B cell (primary cell): ENCODE measurements at regions of chr17 and their contacts with region 1.

Region 1: GRCh38 chr17:40113110-40113906 is 8.5 kb upstream of the MSL1 start:
- DNase-seq: peak; percentile 94
- ATAC-seq: peak; percentile 86
- H3K4me3 ChIP-seq: peak overlapping the region in 4 of 5 experiments; percentile 36 to 62 (median 58)
- H3K4me3 Mint-ChIP-seq: peak overlapping the region; percentile 92
- H3K27ac ChIP-seq: peak overlapping the region; percentile 28 to 40
- H3K27ac Mint-ChIP-seq: peak overlapping the region; percentile 89
- H3K4me1 ChIP-seq: peaks cover 34 to 41% of the 10 kb centered on the region in 2 donors
- H3K4me1 Mint-ChIP-seq: peaks cover 43% of the 10 kb centered on the region
- H3K27me3 ChIP-seq: no peaks in the 10 kb centered on the region
- H3K27me3 Mint-ChIP-seq: no peaks in the 10 kb centered on the region
- CTCF ChIP-seq: peak; percentile 84

Region 2: GRCh38 chr17:39852239-39852638 is 261.1 kb before region 1 on chr17:
- CTCF ChIA-PET with region 1: no interaction called
- POLR2A ChIA-PET with region 1: no interaction called
- intact Hi-C with region 1: no loop called
- DNase-seq: no peak
- ATAC-seq: no peak
- H3K4me3 ChIP-seq: peak overlapping the region in 1 of 5 experiments; percentile 9
- H3K4me3 Mint-ChIP-seq: peak overlapping the region; percentile 61
- H3K27ac ChIP-seq: peak overlapping the region in 1 of 2 donors; percentile 85
- H3K27ac Mint-ChIP-seq: peak overlapping the region; percentile 81
- H3K4me1 ChIP-seq: peaks cover 60 to 63% of the 10 kb centered on the region in 2 donors
- H3K4me1 Mint-ChIP-seq: peaks cover 64% of the 10 kb centered on the region
- H3K27me3 ChIP-seq: no peaks in the 10 kb centered on the region
- H3K27me3 Mint-ChIP-seq: no peaks in the 10 kb centered on the region
- CTCF ChIP-seq: no peak

Region 3: GRCh38 chr17:39923836-39924690 is 189.2 kb before region 1 on chr17:
- CTCF ChIA-PET with region 1: no interaction called
- POLR2A ChIA-PET with region 1: no interaction called
- intact Hi-C with region 1: no loop called
- DNase-seq: no peak
- ATAC-seq: no peak
- H3K4me3 ChIP-seq: no peak overlapping the region
- H3K4me3 Mint-ChIP-seq: no peak overlapping the region
- H3K27ac ChIP-seq: peak overlapping the region in 1 of 2 donors; percentile 27
- H3K27ac Mint-ChIP-seq: no peak overlapping the region
- H3K4me1 ChIP-seq: peaks cover 42 to 52% of the 10 kb centered on the region in 2 donors
- H3K4me1 Mint-ChIP-seq: peaks cover 59% of the 10 kb centered on the region
- H3K27me3 ChIP-seq: no peaks in the 10 kb centered on the region
- H3K27me3 Mint-ChIP-seq: no peaks in the 10 kb centered on the region
- CTCF ChIP-seq: no peak

Region 4: GRCh38 chr17:40018211-40019121 is 94.8 kb before region 1 on chr17:
- CTCF ChIA-PET with region 1: interaction called, 56 read pairs
- POLR2A ChIA-PET with region 1: no interaction called
- intact Hi-C with region 1: loop called (anchors 1 kb)
- DNase-seq: no peak
- ATAC-seq: no peak
- H3K4me3 ChIP-seq: no peak overlapping the region
- H3K4me3 Mint-ChIP-seq: no peak overlapping the region
- H3K27ac ChIP-seq: no peak overlapping the region
- H3K27ac Mint-ChIP-seq: no peak overlapping the region
- H3K4me1 ChIP-seq: peaks cover 0 to 3% of the 10 kb centered on the region in 2 donors
- H3K4me1 Mint-ChIP-seq: no peaks in the 10 kb centered on the region
- H3K27me3 ChIP-seq: no peaks in the 10 kb centered on the region
- H3K27me3 Mint-ChIP-seq: no peaks in the 10 kb centered on the region
- CTCF ChIP-seq: no peak

Region 5: GRCh38 chr17:40062329-40063186 is 50.8 kb before region 1 on chr17 and contains the start of gene THRA:
- CTCF ChIA-PET with region 1: interaction called, 119 read pairs
- POLR2A ChIA-PET with region 1: interaction called, 14 read pairs
- intact Hi-C with region 1: loop called (anchors 1 kb)
- DNase-seq: peak; percentile 85
- ATAC-seq: peak; percentile 92
- H3K4me3 ChIP-seq: peak within 1 kb of the TSS; percentile 53 to 96 (median 95)
- H3K4me3 Mint-ChIP-seq: peak within 1 kb of the TSS; percentile 91
- H3K27ac ChIP-seq: peak within 1 kb of the TSS; percentile 59 to 67
- H3K27ac Mint-ChIP-seq: peak within 1 kb of the TSS; percentile 93
- H3K4me1 ChIP-seq: peaks cover 17 to 23% of the 10 kb centered on the region in 2 donors
- H3K4me1 Mint-ChIP-seq: peaks cover 39% of the 10 kb centered on the region
- H3K27me3 ChIP-seq: peaks cover 0 to 6% (median 1%) of the 10 kb centered on the region in 4 experiments
- H3K27me3 Mint-ChIP-seq: peaks cover 6% of the 10 kb centered on the region
- CTCF ChIP-seq: no peak
- total RNA-seq, gene THRA: 16.8 and 17.1 TPM in 2 replicates

Region 6: GRCh38 chr17:40098846-40099618 is 14.3 kb before region 1 on chr17:
- CTCF ChIA-PET with region 1: interaction called, 111 read pairs
- POLR2A ChIA-PET with region 1: interaction called, 31 read pairs
- intact Hi-C with region 1: loop called (anchors 1 kb)
- DNase-seq: peak; percentile 98
- ATAC-seq: peak; percentile 64
- H3K4me3 ChIP-seq: peak overlapping the region; percentile 51 to 91 (median 78)
- H3K4me3 Mint-ChIP-seq: peak overlapping the region; percentile 77
- H3K27ac ChIP-seq: peak overlapping the region; percentile 92 to 93
- H3K27ac Mint-ChIP-seq: peak overlapping the region; percentile 89
- H3K4me1 ChIP-seq: peaks cover 53 to 70% of the 10 kb centered on the region in 2 donors
- H3K4me1 Mint-ChIP-seq: peaks cover 74% of the 10 kb centered on the region
- H3K27me3 ChIP-seq: no peaks in the 10 kb centered on the region
- H3K27me3 Mint-ChIP-seq: no peaks in the 10 kb centered on the region
- CTCF ChIP-seq: no peak

Region 7: GRCh38 chr17:40168262-40168832 is 55.0 kb after region 1 on chr17:
- CTCF ChIA-PET with region 1: interaction called, 204 read pairs
- POLR2A ChIA-PET with region 1: interaction called, 7 read pairs
- intact Hi-C with region 1: loop called (anchors 1 kb)
- DNase-seq: peak; percentile 74
- ATAC-seq: peak; percentile 89
- H3K4me3 ChIP-seq: no peak overlapping the region
- H3K4me3 Mint-ChIP-seq: no peak overlapping the region
- H3K27ac ChIP-seq: no peak overlapping the region
- H3K27ac Mint-ChIP-seq: peak overlapping the region; percentile 53
- H3K4me1 ChIP-seq: no peaks in the 10 kb centered on the region
- H3K4me1 Mint-ChIP-seq: peaks cover 4% of the 10 kb centered on the region
- H3K27me3 ChIP-seq: no peaks in the 10 kb centered on the region
- H3K27me3 Mint-ChIP-seq: no peaks in the 10 kb centered on the region
- CTCF ChIP-seq: peak; percentile 77

Region 8: DNA sequence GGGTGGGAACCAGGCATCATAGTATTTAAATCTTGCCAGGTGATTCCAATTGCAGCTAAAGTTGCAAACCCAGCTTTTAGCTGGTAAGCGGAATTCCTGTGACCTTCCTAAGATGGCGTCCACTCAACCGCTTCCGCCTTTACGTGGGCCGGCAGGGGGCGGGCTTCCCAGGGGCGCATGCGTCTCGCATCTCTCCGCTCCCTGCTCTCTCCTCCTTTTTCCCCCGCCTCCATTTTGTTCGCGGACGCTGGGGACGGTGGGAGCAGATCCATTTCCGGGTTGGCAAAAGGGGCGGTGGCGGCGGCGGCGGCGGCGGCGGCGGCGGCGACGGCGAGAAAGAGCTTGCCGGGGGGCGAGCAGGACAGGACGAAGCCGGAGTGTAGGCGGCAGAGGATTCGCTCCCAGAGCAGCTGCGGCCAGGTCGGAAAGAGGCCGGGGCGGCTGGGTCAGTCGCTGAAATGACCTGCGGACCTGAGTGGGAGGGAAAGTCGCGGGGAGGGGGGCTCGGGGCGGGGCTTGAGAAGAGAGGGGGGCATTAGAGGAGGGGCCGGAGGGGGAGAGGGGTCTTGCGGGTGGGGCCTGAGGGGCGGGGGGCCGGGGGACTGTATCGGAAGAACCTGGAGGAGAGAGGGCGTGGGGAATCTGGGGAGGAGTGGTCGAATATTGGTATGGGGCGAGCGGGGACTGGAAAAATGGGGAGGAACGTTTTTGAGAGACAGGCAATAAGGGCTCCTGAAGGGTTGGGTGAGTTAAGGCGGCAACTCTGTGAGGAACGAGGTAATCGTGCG is 106.0 kb after region 1 on chr17 and contains the start of gene WIPF2:
- CTCF ChIA-PET with region 1: interaction called, 13 read pairs
- POLR2A ChIA-PET with region 1: no interaction called
- intact Hi-C with region 1: loop called (anchors 2 kb)
- DNase-seq: peak; percentile 97
- ATAC-seq: peak; percentile 86
- H3K4me3 ChIP-seq: peak within 1 kb of the TSS; percentile 57 to 94 (median 82)
- H3K4me3 Mint-ChIP-seq: peak within 1 kb of the TSS; percentile 93
- H3K27ac ChIP-seq: peak within 1 kb of the TSS; percentile 92 to 100
- H3K27ac Mint-ChIP-seq: peak within 1 kb of the TSS; percentile 99
- H3K4me1 ChIP-seq: peaks cover 12 to 21% of the 10 kb centered on the region in 2 donors
- H3K4me1 Mint-ChIP-seq: peaks cover 36% of the 10 kb centered on the region
- H3K27me3 ChIP-seq: no peaks in the 10 kb centered on the region
- H3K27me3 Mint-ChIP-seq: no peaks in the 10 kb centered on the region
- CTCF ChIP-seq: peak; percentile 71
- total RNA-seq, gene WIPF2: 46.6 and 48.4 TPM in 2 replicates

Region 9: GRCh38 chr17:40278414-40278813 is 165.1 kb after region 1 on chr17:
- CTCF ChIA-PET with region 1: no interaction called
- POLR2A ChIA-PET with region 1: no interaction called
- intact Hi-C with region 1: no loop called
- DNase-seq: no peak
- ATAC-seq: no peak
- H3K4me3 ChIP-seq: no peak overlapping the region
- H3K4me3 Mint-ChIP-seq: no peak overlapping the region
- H3K27ac ChIP-seq: no peak overlapping the region
- H3K27ac Mint-ChIP-seq: peak overlapping the region; percentile 41
- H3K4me1 ChIP-seq: peaks cover 11 to 17% of the 10 kb centered on the region in 2 donors
- H3K4me1 Mint-ChIP-seq: peaks cover 10% of the 10 kb centered on the region
- H3K27me3 ChIP-seq: no peaks in the 10 kb centered on the region
- H3K27me3 Mint-ChIP-seq: no peaks in the 10 kb centered on the region
- CTCF ChIP-seq: no peak

Region 10: DNA sequence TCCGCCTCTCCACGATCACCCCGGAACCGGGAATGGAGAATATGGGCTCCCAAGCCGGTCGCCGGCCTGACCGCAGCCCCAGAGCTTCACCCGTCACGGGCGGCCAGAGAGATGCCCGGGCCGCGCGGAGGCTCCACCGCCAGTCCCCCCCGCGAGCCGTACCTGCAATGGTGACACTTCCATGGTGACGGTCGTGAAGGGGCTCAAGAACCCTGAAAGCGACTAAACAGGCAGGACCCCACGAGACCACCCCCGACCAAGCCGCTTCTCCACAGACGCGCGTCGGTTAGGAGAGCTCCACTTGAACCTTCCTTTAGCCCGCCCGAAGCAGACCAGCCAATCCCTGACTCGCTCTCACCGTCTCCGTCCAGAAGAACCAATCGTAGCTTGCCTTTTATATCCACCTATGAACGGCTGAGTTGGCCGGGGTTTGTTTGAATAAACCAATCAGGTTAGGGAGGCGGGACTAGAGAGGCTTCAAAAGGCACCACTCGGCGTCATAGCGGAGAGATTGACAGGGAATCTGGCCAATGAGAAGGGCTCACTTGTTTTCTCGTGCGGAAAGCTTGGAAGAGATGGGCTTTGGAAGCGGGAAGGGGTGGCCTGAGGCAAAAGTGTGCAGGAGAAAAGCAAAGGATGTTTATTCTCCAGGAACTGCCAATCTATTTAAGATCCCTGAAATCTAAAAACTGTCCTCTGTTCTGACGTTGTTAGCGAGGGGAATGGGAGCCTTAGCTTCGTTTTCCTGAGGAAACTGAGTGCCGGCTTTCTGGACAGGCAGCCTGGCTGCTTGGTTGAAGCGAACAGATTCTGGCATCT is 304.5 kb after region 1 on chr17 and contains the start of gene TOP2A:
- CTCF ChIA-PET with region 1: no interaction called
- POLR2A ChIA-PET with region 1: no interaction called
- intact Hi-C with region 1: loop called (anchors 5 kb)
- DNase-seq: peak; percentile 99
- ATAC-seq: peak; percentile 99
- H3K4me3 ChIP-seq: peak within 1 kb of the TSS; percentile 63 to 93 (median 84)
- H3K4me3 Mint-ChIP-seq: peak within 1 kb of the TSS; percentile 89
- H3K27ac ChIP-seq: peak within 1 kb of the TSS; percentile 63 to 72
- H3K27ac Mint-ChIP-seq: peak within 1 kb of the TSS; percentile 86
- H3K4me1 ChIP-seq: peaks cover 7 to 17% of the 10 kb centered on the region in 2 donors
- H3K4me1 Mint-ChIP-seq: peaks cover 15% of the 10 kb centered on the region
- H3K27me3 ChIP-seq: no peaks in the 10 kb centered on the region
- H3K27me3 Mint-ChIP-seq: no peaks in the 10 kb centered on the region
- CTCF ChIP-seq: no peak
- total RNA-seq, gene TOP2A: 3.0 and 3.1 TPM in 2 replicates